ENCODE measurements at regions of chr6 and their contacts with region 1.

Region 1: GRCh38 chr6:45116714-45117410 is 211.3 kb upstream of the RUNX2 start:
- DNase-seq: no peak
- ATAC-seq: no peak
- H3K4me3 ChIP-seq: no peak overlapping the region
- H3K4me3 Mint-ChIP-seq: peak overlapping the region in 4 of 10 donors; percentile 7 to 28 (median 8)
- H3K27ac ChIP-seq: no peak overlapping the region
- H3K27ac Mint-ChIP-seq: peak overlapping the region in 2 of 9 donors; percentile 6 to 16
- H3K4me1 ChIP-seq: peaks cover 5% of the 10 kb centered on the region in 2 donors
- H3K4me1 Mint-ChIP-seq: peaks cover 10 to 25% (median 21%) of the 10 kb centered on the region in 7 donors
- H3K27me3 ChIP-seq: no peaks in the 10 kb centered on the region
- H3K27me3 Mint-ChIP-seq: no peaks in the 10 kb centered on the region

Region 2: GRCh38 chr6:44569931-44570385 is 546.9 kb before region 1 on chr6:
- CTCF ChIA-PET with region 1: no interaction called
- POLR2A ChIA-PET with region 1: no interaction called
- intact Hi-C with region 1: no loop called
- DNase-seq: no peak
- ATAC-seq: peak; percentile 70
- H3K4me3 ChIP-seq: no peak overlapping the region
- H3K4me3 Mint-ChIP-seq: no peak overlapping the region
- H3K27ac ChIP-seq: no peak overlapping the region
- H3K27ac Mint-ChIP-seq: no peak overlapping the region
- H3K4me1 ChIP-seq: no peaks in the 10 kb centered on the region
- H3K4me1 Mint-ChIP-seq: peaks cover 0 to 2% (median 0%) of the 10 kb centered on the region in 7 donors
- H3K27me3 ChIP-seq: no peaks in the 10 kb centered on the region
- H3K27me3 Mint-ChIP-seq: peaks cover 0 to 17% (median 12%) of the 10 kb centered on the region in 5 donors

Region 3: GRCh38 chr6:45105170-45105820 is 11.6 kb before region 1 on chr6:
- CTCF ChIA-PET with region 1: no interaction called
- POLR2A ChIA-PET with region 1: no interaction called
- intact Hi-C with region 1: loop called in 1 of 2 experiments (anchors 2 kb)
- DNase-seq: no peak
- ATAC-seq: no peak
- H3K4me3 ChIP-seq: no peak overlapping the region
- H3K4me3 Mint-ChIP-seq: no peak overlapping the region
- H3K27ac ChIP-seq: no peak overlapping the region
- H3K27ac Mint-ChIP-seq: no peak overlapping the region
- H3K4me1 ChIP-seq: no peaks in the 10 kb centered on the region
- H3K4me1 Mint-ChIP-seq: peaks cover 3 to 21% (median 14%) of the 10 kb centered on the region in 7 donors
- H3K27me3 ChIP-seq: no peaks in the 10 kb centered on the region
- H3K27me3 Mint-ChIP-seq: no peaks in the 10 kb centered on the region

Region 4: GRCh38 chr6:45265246-45265645 is 148.4 kb after region 1 on chr6:
- CTCF ChIA-PET with region 1: no interaction called
- POLR2A ChIA-PET with region 1: no interaction called
- intact Hi-C with region 1: no loop called
- DNase-seq: no peak
- ATAC-seq: no peak
- H3K4me3 ChIP-seq: no peak overlapping the region
- H3K4me3 Mint-ChIP-seq: no peak overlapping the region
- H3K27ac ChIP-seq: no peak overlapping the region
- H3K27ac Mint-ChIP-seq: no peak overlapping the region
- H3K4me1 ChIP-seq: no peaks in the 10 kb centered on the region
- H3K4me1 Mint-ChIP-seq: peaks cover 3 to 24% (median 13%) of the 10 kb centered on the region in 7 donors
- H3K27me3 ChIP-seq: no peaks in the 10 kb centered on the region
- H3K27me3 Mint-ChIP-seq: no peaks in the 10 kb centered on the region